Activated naive CD4-positive, alpha-beta T cell treated with anti-CD3 and anti-CD28 coated beads for 36 hours (primary cell): ENCODE measurements at regions of chr5 and their contacts with region 1.

Region 1: DNA sequence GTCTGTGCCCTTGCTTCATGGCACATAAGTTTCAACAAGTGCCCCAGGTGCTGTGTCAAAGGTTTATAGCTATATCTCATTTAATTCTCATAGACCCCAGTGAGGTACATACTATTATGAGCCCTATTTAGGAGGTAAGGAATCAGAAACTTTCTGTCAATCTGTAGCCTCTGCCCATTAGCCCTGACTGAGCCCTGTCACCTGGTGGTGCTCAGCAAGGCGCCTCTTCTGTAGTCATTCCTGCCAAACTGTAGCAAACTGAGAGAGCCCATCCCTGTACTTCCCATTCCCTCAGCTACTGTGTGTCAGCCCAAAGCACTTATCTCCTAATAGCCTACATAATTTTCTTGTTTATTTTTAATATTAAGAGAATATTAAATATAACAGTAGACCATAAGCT is 46.5 kb upstream of the FOXI1 start:
- DNase-seq: no peak
- H3K4me3 Mint-ChIP-seq: no peak overlapping the region
- H3K27ac Mint-ChIP-seq: no peak overlapping the region
- H3K4me1 Mint-ChIP-seq: no peaks in the 10 kb centered on the region
- H3K27me3 Mint-ChIP-seq: no peaks in the 10 kb centered on the region

Region 2: DNA sequence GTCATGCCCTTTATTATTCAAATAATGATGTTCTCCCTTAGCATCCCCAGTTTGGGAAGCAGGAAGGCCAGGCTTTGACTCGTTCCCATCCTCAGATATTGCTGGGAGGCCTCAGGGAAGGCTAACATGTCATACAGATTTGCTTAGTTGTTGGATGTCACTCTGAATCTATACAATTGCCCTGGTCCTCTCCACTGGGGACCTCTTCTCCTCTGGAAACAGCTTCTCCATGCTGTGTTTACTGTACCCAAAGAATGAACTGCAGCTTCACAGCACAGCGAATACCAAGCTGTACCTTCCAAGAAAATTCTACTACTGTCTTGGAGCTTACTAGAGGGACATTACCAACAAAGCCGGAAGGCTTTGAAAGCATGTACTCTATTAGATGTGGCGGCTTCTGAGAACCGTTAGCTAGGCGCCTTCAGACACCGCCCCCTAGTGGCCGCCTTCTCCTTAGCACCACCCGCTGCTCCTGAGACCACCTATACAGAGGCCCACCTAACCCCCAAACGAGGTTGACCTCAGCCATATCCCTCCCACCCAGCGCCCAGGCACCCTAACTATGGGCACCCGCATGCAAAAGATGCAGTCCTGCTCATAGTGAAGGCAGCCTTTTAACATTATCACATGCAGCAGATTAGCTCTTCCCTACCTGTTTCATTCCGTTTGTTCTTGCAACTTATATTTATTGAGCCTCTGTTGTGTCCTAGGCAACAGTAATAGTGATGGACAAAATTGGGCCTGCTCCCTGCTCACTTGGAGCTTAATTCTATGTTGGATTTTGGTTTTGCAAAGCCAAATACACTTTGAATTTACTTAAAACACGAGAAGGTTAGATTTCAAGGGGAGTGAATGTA is 11.6 kb after region 1 on chr5:
- CTCF ChIA-PET with region 1: interaction called, 12 read pairs
- intact Hi-C with region 1: no loop called
- DNase-seq: no peak
- H3K4me3 Mint-ChIP-seq: no peak overlapping the region
- H3K27ac Mint-ChIP-seq: no peak overlapping the region
- H3K4me1 Mint-ChIP-seq: peaks cover under 1% of the 10 kb centered on the region
- H3K27me3 Mint-ChIP-seq: no peaks in the 10 kb centered on the region